ENCODE measurements at regions of chr6 and their contacts with region 1.

Region 1: GRCh38 chr6:110688661-110689268 is 126.5 kb downstream of the CDK19 start:
- DNase-seq: no peak
- H3K4me3 ChIP-seq: no peak overlapping the region
- H3K27ac ChIP-seq: no peak overlapping the region
- H3K4me1 ChIP-seq: no peaks in the 10 kb centered on the region
- H3K27me3 ChIP-seq: no peaks in the 10 kb centered on the region
- CTCF ChIP-seq: no peak
- POLR2A ChIP-seq: no peak

Region 2: GRCh38 chr6:110800196-110800838 is 111.6 kb after region 1 on chr6:
- intact Hi-C with region 1: loop called in 1 of 2 experiments (anchors 10 kb)
- DNase-seq: no peak
- H3K4me3 ChIP-seq: no peak overlapping the region
- H3K27ac ChIP-seq: no peak overlapping the region
- H3K4me1 ChIP-seq: no peaks in the 10 kb centered on the region
- H3K27me3 ChIP-seq: no peaks in the 10 kb centered on the region
- CTCF ChIP-seq: no peak
- POLR2A ChIP-seq: no peak

Region 3: DNA sequence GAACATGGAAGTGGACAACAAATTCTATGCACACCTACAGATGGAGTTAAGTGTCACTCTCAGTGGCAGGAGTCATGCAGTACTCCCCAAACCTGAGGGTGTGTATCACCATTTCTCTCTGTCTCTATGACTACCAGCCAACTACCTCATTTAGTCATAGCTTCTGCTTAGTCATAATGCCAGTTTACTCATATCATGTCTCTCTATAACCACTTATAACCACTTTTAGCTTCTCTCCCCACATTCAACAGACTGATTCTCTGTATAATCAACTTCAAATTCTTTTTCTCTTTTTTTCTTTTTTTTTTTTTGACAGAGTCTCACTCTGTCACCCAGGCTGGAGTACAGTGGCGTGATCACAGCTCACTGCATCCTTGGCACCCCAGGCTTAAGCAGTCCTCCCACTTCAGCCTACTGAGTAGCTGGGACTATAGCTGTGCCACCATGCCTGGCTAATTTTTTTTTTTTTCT is 256.0 kb after region 1 on chr6:
- intact Hi-C with region 1: loop called (anchors 5 kb)
- DNase-seq: no peak
- H3K4me3 ChIP-seq: no peak overlapping the region
- H3K27ac ChIP-seq: no peak overlapping the region
- H3K4me1 ChIP-seq: no peaks in the 10 kb centered on the region
- H3K27me3 ChIP-seq: no peaks in the 10 kb centered on the region
- CTCF ChIP-seq: no peak
- POLR2A ChIP-seq: no peak